ENCODE measurements at regions of chr1 and their contacts with region 1.

Region 1: DNA sequence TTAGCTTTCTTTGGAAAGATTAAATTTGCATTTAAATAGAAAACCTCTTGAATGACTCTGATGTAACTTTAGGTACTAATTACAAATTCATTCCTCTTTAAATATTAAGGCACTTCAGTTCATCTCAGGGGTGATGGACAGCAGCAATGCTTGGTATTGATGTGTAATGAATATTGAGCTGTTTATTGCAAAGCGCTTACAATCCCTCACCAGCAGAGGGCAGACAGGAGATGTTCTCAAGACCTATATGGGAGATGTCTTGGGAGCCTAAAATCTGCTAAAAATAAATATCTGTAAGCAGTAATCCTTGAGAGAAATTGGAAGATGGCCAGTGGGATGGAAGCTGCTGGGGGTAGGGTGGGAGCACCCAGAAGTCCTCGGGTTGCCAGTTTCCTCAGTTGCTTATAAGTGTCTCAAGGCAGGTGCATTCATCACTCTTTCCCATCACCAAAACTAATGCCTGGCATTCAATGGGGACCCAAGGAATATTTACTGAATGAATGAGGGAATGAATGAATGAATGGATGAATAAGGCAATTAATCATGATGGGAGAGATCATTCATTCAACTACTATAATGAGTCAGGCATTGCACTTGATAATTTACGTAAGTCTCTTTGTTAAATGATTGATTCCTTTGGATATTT is 2.3 kb downstream of the KLHDC8A start:
- DNase-seq: no peak
- H3K4me3 ChIP-seq: no peak overlapping the region
- CTCF ChIP-seq: peak; percentile 73

Region 2: DNA sequence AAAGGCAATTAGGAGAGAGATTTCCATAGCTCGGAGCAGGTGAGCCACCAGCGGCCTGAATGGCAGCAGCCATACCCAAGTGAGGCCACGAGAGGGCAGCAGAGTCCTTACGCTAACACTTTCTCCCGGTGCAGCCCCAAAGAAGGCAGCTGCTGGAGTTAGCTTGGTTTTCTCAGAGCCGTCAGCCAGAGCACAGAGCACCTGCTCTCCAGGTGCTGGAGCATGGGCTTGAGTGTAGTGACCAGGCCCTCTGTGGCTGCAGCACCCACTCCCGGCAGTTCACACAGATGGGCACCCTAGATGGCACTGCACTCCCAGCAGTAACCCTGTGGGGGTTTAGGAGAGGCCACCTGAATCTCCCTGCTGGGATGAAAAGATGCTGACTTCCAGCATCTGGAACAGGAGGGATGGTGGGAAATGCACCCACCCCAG is 80.8 kb before region 1 on chr1:
- CTCF ChIA-PET with region 1: interaction called, 49 read pairs
- POLR2A ChIA-PET with region 1: no interaction called
- DNase-seq: no peak
- H3K4me3 ChIP-seq: no peak overlapping the region
- CTCF ChIP-seq: peak; percentile 96

Region 3: GRCh38 chr1:205310976-205311704 is 43.2 kb before region 1 on chr1:
- CTCF ChIA-PET with region 1: no interaction called
- POLR2A ChIA-PET with region 1: no interaction called
- DNase-seq: no peak
- H3K4me3 ChIP-seq: no peak overlapping the region
- CTCF ChIP-seq: no peak

Region 4: GRCh38 chr1:205365945-205366463 is 11.6 kb after region 1 on chr1:
- CTCF ChIA-PET with region 1: interaction called, 58 read pairs
- POLR2A ChIA-PET with region 1: no interaction called
- DNase-seq: no peak
- H3K4me3 ChIP-seq: no peak overlapping the region
- CTCF ChIP-seq: no peak

Region 5: GRCh38 chr1:205391386-205391785 is 37.0 kb after region 1 on chr1:
- CTCF ChIA-PET with region 1: interaction called, 17 read pairs
- POLR2A ChIA-PET with region 1: no interaction called
- DNase-seq: no peak
- H3K4me3 ChIP-seq: no peak overlapping the region
- CTCF ChIP-seq: no peak

Region 6: DNA sequence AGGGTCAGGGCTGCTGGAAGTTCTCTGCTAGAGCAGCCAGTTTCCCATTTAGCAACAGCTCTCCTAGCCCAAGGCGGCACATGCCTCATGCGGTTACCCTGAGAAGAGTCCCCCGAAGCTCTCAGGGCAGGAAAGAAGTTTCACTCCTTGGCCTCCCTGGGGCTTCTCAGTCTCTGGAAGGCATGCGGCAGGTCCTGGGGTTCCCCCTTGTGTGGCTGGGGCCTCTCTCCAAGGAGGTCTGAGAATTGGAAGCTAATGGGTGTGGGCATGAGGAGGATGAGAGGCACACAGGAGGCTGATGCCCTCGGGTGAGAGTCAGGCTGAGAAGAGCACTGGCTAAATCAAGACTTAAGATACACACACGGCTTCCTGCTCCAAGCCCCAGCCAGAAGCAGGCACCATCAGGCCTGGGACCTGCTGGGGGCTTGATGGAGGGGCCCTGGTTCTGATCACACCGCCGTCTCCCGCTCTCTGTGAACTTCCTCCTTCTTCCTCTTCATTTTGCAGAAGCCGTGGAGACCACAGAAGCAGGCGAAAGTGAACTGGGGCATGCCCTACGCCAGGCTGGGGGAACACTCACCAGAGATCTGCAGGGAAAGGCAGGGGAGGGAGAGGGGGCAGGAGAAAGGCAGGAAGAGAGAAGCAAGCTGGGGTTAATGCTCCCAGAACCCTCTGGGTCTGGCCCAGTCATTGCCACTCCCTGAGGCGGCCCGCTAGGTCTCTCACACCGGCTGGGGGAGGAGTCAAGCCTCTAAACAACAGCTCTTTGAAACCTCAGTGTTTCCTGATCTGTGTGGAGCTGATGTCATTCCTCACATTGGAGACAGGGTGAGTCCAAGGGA is 86.3 kb after region 1 on chr1:
- CTCF ChIA-PET with region 1: interaction called, 21 read pairs
- POLR2A ChIA-PET with region 1: no interaction called
- DNase-seq: no peak
- H3K4me3 ChIP-seq: no peak overlapping the region
- CTCF ChIP-seq: no peak

Region 7: GRCh38 chr1:205515781-205516253 is 161.4 kb after region 1 on chr1:
- CTCF ChIA-PET with region 1: interaction called, 160 read pairs
- POLR2A ChIA-PET with region 1: no interaction called
- DNase-seq: no peak
- H3K4me3 ChIP-seq: no peak overlapping the region
- CTCF ChIP-seq: no peak

Measured in AG04449 (cell line).